ENCODE measurements at regions of chr7 and their contacts with region 1.

Region 1: DNA sequence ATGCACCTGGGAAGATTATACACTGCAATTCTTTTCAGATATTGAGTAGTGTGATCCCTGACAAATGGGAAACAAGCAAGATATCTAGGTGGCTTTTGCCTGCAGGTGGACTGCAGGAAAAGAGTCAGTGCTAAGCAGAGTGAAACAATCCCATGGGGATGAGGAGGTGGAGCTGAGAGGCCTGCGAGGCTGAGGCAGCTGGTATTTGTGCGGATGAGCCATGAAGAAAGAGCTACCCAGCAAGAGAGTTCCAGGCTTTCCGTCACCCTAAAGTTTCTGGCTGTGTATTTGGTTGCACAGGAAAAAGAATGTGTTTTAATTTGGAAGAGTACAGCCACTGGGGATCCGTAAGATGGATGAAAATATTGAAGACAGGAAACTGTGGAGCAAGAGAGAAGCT is 714.1 kb upstream of the COBL start:
- DNase-seq: no peak
- H3K27ac ChIP-seq: no peak overlapping the region
- CTCF ChIP-seq: no peak

Region 2: DNA sequence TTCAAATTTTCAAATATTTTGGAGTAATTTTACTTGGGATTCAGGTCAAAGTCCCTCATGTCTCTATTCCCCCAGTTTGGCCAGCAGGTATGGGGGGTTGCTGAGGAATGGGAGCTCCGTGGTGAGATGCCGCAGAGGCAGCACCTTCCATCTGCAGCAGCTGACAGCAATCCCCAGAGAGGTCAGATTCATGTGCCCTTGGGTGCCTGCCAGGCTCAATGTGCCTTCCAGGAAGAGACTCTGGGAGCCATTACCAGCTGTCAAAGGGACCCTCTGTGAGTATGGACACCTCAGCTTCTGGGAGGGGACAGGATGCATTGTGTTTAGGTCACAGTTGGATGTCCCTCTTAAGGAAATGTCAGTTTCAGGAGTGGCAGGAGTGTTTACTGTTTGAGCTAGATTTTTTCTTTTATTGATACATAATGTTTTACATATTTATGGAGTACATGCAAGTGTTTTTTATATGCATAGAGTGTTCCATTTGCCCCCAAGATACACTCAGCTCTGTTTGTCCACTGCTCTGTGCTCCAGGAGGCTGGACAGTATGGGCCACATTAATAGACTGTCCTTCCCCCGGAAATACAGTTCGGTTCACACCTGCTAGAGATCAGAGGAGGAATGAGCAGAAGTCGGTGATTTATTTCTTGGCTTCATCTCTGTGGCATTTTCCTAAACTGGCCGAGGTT is 1172.8 kb before region 1 on chr7:
- CTCF ChIA-PET with region 1: no interaction called
- POLR2A ChIA-PET with region 1: interaction called, 11 read pairs
- DNase-seq: no peak
- H3K27ac ChIP-seq: no peak overlapping the region
- CTCF ChIP-seq: no peak

Region 3: GRCh38 chr7:52146871-52147634 is 116.3 kb after region 1 on chr7:
- CTCF ChIA-PET with region 1: no interaction called
- POLR2A ChIA-PET with region 1: no interaction called
- DNase-seq: no peak
- H3K27ac ChIP-seq: no peak overlapping the region
- CTCF ChIP-seq: no peak

Region 4: DNA sequence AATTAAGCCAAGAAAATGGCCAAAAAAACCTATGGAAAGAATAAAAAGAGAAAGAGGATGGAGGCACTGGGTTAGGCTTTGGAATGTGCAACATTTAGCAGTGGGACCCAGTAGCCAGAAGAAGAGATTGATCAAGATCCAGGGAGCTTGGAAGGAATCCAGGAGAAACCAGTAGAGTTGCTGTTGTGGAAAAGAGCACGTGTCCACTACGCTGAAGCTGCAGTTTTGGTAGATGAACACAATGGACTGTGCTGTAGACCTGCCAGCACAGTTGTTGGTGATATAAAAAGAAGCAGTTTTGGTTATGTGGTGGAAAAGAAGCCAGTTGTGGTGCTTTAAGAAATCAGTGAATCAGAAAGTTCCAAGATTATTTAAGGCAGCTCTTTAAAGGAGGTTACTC is 202.5 kb after region 1 on chr7:
- CTCF ChIA-PET with region 1: no interaction called
- POLR2A ChIA-PET with region 1: no interaction called
- DNase-seq: no peak
- H3K27ac ChIP-seq: no peak overlapping the region
- CTCF ChIP-seq: no peak

Measured in RWPE1 (cell line).